Activated naive CD4-positive, alpha-beta T cell treated with anti-CD3 and anti-CD28 coated beads, Interleukin-2, amount 10 ng/mL, durations not matched to agents 7 days and 5 days (primary cell): ENCODE measurements at regions of chr13 and their contacts with region 1.

Region 1: DNA sequence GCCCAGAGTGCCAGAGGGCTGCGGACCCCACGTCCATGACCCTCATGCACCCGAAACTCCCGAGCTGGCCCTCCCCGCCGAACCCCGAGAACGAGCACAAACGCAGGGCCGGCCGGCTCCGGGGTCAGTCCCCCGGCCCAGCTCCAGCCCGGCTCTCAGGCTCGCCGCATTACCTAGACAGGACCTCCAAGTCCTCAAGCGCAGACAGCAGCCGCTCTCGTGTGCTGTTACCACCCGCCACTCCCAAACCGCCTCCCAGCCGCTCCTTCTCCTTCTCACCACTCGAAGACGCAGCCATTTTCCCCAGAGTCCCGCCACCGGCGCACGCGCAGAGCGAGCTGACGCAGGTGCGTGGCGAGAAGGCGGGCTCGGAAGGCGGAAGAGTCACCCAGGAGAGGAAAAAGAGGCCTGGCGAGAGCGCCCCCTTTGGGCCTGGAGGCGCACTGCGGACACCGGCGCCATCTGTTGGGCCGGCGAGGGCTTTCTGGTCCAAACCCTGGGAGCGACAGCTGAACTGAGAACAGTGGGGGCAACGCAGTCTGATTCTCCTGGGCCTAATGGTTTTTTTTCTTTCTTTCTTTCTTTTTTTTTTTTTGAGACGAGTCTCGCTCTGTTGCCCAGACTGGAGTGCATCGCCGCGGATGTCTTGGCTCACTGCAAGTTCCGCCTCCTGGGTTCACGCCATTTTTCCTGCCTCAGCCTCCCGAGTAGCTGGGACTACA is at the start of gene MED4:
- DNase-seq: peak; percentile 97
- H3K4me3 Mint-ChIP-seq: peak within 1 kb of the TSS; percentile 86
- H3K27ac Mint-ChIP-seq: peak within 1 kb of the TSS; percentile 87
- H3K4me1 Mint-ChIP-seq: peaks cover 37% of the 10 kb centered on the region
- H3K27me3 Mint-ChIP-seq: peaks cover 10% of the 10 kb centered on the region

Region 2: DNA sequence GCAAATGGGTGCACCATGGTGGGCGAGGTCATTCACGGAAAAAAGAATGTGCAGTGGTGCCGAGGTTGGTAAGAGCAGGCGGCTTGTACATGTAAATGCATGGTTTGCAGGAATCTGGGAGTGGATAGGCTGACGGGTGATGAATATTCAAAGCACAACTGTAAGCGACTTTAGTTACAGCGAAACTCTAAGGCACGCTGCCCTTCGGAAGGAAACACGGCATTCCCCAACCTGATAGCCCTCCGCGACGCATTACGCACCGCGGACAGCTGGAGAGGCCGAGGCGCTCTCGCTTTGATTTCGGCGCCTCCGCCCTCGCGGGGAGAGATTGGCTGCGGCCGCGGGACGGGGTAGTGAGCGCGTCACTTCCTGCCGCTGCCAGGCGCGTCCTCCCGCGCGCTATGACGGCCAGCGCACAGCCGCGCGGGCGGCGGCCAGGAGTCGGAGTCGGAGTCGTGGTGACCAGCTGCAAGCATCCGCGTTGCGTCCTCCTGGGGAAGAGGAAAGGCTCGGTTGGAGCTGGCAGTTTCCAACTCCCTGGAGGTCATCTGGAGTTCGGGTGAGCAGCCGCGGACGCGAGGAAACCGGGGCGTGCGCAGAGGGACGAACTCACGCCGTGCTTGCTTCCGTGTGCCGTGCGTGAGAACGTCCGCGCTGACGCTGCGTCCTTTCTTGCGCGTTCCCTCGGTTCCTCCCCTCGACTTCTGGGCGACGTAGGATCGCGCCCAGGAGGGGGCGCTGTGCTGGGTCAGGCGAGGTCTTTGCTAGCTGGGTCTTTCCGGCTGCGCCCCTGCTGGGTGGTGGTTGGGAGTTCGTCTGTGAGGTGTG is 57.4 kb before region 1 on chr13 and contains the start of gene NUDT15:
- CTCF ChIA-PET with region 1: interaction called, 21 read pairs
- DNase-seq: peak; percentile 97
- H3K4me3 Mint-ChIP-seq: peak within 1 kb of the TSS; percentile 96
- H3K27ac Mint-ChIP-seq: peak within 1 kb of the TSS; percentile 96
- H3K4me1 Mint-ChIP-seq: peaks cover 48% of the 10 kb centered on the region
- H3K27me3 Mint-ChIP-seq: peaks cover 5% of the 10 kb centered on the region

Region 3: GRCh38 chr13:48078251-48078656 is 16.7 kb before region 1 on chr13:
- CTCF ChIA-PET with region 1: interaction called, 19 read pairs
- DNase-seq: peak; percentile 53
- H3K4me3 Mint-ChIP-seq: no peak overlapping the region
- H3K27ac Mint-ChIP-seq: peak overlapping the region; percentile 52
- H3K4me1 Mint-ChIP-seq: peaks cover 9% of the 10 kb centered on the region
- H3K27me3 Mint-ChIP-seq: no peaks in the 10 kb centered on the region

Region 4: GRCh38 chr13:48199499-48199898 is 104.6 kb after region 1 on chr13:
- CTCF ChIA-PET with region 1: no interaction called
- DNase-seq: no peak
- H3K4me3 Mint-ChIP-seq: no peak overlapping the region
- H3K27ac Mint-ChIP-seq: no peak overlapping the region
- H3K4me1 Mint-ChIP-seq: peaks cover 10% of the 10 kb centered on the region
- H3K27me3 Mint-ChIP-seq: peaks cover 29% of the 10 kb centered on the region

Region 5: GRCh38 chr13:48291730-48292129 is 196.8 kb after region 1 on chr13:
- CTCF ChIA-PET with region 1: no interaction called
- DNase-seq: no peak
- H3K4me3 Mint-ChIP-seq: no peak overlapping the region
- H3K27ac Mint-ChIP-seq: no peak overlapping the region
- H3K4me1 Mint-ChIP-seq: peaks cover 5% of the 10 kb centered on the region
- H3K27me3 Mint-ChIP-seq: peaks cover 18% of the 10 kb centered on the region